Esophagus muscularis mucosa (tissue), 4 donors: ENCODE measurements at regions of chr6 and their contacts with region 1.

Region 1: GRCh38 chr6:3732345-3733141 is 19.0 kb downstream of the PXDC1 start:
- DNase-seq: no peak
- H3K4me3 ChIP-seq: no peak overlapping the region
- H3K27ac ChIP-seq: peak overlapping the region in 2 of 4 donors; percentile 16 to 34
- H3K4me1 ChIP-seq: peaks cover 8 to 42% (median 37%) of the 10 kb centered on the region in 4 donors
- H3K27me3 ChIP-seq: no peaks in the 10 kb centered on the region
- CTCF ChIP-seq: peak; percentile 83 to 86 (median 86)
- EP300 ChIP-seq: no peak
- POLR2A ChIP-seq: no peak

Region 2: DNA sequence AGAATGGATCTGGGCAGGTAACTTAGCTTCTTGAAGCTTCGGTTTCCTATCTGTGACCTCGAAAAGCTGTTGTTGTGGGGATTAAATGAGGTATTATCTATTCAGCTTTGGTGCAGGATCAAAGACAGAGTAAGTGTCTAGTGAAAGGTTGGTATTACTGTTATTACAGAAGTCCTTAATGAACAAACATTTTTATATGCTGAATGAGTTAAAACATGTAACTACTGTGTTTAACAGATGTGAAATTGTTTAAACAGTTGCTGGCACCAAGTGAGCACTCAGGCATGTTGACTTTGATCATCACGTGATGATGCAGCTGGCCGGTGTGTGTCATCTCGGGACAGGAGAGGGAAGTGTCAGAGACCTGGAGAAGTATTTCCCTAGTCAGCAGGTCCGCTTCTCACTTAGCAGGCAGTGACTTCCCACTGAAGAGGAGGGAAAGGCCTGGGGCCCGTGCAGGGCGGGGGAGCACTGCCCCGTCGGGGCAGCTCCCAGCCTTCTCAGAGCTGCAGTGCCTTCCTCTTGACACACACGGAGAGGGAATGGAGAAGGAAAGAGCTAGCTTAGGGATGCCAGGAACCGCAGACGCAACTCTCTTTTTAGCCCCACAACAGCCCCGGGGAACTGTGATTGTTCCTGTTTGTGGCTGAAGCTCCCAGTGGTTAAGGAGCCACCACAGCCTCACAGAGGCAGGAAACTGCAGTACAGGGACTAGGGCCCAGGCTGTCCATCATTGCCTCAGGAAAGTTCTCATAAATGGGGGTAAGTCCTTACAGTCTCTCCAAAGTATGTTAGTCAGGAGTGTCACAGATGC is 593.2 kb before region 1 on chr6:
- intact Hi-C with region 1: loop called (anchors 10 kb)
- DNase-seq: no peak
- H3K4me3 ChIP-seq: no peak overlapping the region
- H3K27ac ChIP-seq: peak overlapping the region; percentile 6 to 44 (median 16)
- H3K4me1 ChIP-seq: peaks cover 4 to 11% (median 7%) of the 10 kb centered on the region in 4 donors
- H3K27me3 ChIP-seq: no peaks in the 10 kb centered on the region
- CTCF ChIP-seq: no peak
- EP300 ChIP-seq: no peak
- POLR2A ChIP-seq: no peak

Region 3: GRCh38 chr6:3209114-3210023 is 523.2 kb before region 1 on chr6:
- intact Hi-C with region 1: no loop called
- DNase-seq: no peak
- H3K4me3 ChIP-seq: no peak overlapping the region
- H3K27ac ChIP-seq: peak overlapping the region in 3 of 4 donors; percentile 18 to 77 (median 44)
- H3K4me1 ChIP-seq: peaks cover 0 to 40% (median 34%) of the 10 kb centered on the region in 4 donors
- H3K27me3 ChIP-seq: no peaks in the 10 kb centered on the region
- CTCF ChIP-seq: peak in 1 of 3 experiments; percentile 4
- EP300 ChIP-seq: no peak
- POLR2A ChIP-seq: no peak

Region 4: DNA sequence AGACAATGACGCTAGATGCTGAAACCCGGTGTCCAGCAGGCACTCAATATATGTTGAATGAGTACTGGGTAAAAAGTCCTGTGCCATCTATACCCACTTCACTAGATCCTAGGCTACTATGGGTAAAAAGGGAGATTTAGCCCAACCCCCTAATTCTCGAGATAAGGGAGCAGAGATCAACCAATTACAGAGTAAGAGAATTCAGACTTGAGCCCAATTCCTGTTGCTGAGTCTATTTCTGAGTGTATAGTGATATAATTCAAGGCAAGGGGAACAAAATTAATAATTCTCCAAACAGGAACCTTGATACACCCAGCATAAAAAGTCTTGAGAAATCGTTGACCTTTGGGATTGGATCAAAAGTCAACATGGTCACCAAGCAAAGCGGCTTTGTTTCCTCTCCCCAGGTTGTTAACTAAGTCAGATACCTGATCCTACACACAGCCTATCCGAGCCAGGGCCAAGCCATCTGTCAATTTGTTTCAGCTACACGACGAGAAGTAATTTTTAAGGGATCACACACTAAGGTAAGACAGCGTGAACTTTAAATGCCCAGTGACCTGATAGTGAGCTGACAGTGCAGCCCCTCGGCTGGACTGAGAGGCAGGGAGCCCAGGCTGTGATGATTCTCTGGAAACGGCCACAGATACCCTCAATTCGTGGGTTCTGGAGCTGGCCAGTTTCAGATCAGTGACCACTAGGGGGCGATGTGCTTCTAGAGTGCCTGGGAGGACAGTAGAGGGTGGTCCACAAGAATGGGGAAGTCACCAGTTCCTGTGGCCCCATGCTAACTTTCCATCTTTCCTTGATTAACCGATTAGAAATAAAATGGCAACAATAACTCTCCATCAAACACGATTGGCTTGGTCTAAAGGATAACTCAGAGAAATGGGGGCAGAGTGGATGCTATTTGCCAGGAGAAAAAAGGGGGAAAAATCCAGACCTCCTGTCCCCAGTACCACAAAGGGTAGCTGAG is 321.9 kb before region 1 on chr6:
- intact Hi-C with region 1: loop called (anchors 5 kb)
- DNase-seq: no peak
- H3K4me3 ChIP-seq: no peak overlapping the region
- H3K27ac ChIP-seq: no peak overlapping the region
- H3K4me1 ChIP-seq: peaks cover 0 to 15% (median 10%) of the 10 kb centered on the region in 4 donors
- H3K27me3 ChIP-seq: no peaks in the 10 kb centered on the region
- CTCF ChIP-seq: peak; percentile 58 to 74 (median 64)
- EP300 ChIP-seq: no peak
- POLR2A ChIP-seq: no peak

Region 5: DNA sequence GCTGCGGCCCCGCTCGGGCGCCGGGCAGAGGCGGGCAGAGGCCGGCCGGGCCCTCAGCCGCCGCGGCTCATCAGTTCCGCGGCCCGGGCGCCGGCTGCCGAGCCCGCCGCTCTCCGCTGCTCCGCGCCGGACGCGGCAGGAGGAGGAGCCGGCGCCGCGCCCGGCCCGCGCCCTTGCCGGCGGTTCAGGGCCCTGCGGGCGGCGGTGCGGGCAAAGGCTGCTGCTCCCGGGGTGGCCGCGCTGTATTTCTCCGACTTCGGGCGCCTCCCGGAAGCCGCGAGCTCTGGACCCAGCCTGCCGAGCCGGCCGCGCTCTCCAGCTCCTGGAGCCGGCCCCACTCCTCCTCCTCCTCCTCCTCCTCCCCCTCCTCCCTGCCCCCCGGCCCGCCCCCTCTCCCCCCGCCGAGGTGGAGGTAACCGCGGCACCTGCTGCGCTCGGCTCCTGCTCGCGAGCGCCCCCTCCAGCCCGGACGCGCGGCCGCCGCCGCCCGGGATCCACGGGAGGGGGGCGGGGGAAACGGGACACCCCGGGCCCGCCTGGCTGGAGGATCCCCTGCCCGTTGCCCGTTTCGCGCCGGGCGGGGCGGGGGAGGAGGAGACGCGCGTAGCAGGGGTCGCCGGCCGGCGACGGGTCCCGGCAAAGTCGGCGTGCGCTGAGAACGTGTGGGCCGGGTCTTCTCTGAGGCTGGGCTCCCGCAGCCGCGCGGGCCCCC is 275.6 kb before region 1 on chr6 and contains the start of gene SLC22A23:
- intact Hi-C with region 1: loop called (anchors 5 kb)
- DNase-seq: no peak
- H3K4me3 ChIP-seq: peak within 1 kb of the TSS; percentile 64 to 75 (median 74)
- H3K27ac ChIP-seq: peak within 1 kb of the TSS; percentile 83 to 87 (median 84)
- H3K4me1 ChIP-seq: peaks cover 28 to 42% (median 40%) of the 10 kb centered on the region in 4 donors
- H3K27me3 ChIP-seq: no peaks in the 10 kb centered on the region
- CTCF ChIP-seq: peak; percentile 63 to 92 (median 79)
- EP300 ChIP-seq: no peak
- POLR2A ChIP-seq: no peak
- total RNA-seq, gene SLC22A23: 7.6 to 13.1 (median 9.5) TPM

Region 6: GRCh38 chr6:3566812-3567211 is 165.7 kb before region 1 on chr6:
- intact Hi-C with region 1: no loop called
- DNase-seq: no peak
- H3K4me3 ChIP-seq: no peak overlapping the region
- H3K27ac ChIP-seq: no peak overlapping the region
- H3K4me1 ChIP-seq: peaks cover 0 to 10% (median 4%) of the 10 kb centered on the region in 4 donors
- H3K27me3 ChIP-seq: no peaks in the 10 kb centered on the region
- CTCF ChIP-seq: no peak
- EP300 ChIP-seq: no peak
- POLR2A ChIP-seq: no peak

Region 7: DNA sequence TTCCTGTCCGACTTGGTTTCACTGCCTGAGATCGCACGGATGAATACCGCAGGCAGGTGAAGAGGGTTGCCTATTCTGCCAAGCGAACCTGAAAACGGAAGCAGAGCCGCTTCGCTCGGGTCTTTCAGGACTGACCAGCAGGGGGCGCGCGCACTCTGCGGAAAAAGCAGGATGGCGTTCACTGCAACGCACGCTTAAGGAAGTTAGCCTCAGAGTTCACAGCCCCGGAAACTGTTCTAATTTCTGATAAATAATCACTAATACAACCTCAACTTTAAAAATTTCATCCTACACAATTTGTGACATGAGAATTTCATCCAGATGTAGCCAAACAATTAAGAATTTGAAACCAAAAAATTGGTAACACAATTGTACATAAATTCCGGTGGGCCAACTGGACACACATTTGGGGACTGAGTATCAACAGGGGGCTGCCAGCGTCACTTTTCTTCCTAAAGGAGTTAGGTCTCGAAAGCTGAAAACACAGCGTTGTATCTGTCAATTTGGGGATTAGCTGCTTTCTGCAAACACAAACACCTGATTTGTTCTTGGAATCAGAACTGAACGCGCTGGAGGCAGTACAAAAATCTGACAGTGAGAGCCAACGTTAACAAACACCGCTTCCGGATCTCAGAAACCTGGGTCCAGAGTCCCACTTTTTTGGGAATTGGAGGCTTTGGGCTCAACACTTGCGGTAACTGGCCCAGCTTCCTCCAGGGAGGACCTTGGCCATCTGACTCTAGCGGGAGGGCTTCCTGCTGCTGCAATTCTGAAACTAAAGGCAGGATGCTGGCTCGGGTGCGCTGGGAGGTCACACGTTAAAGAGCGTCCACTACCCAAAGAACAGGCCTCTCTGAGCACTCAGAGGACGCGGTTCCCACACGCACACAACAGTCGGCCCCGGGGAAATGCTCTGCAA is 10.1 kb after region 1 on chr6:
- intact Hi-C with region 1: no loop called
- DNase-seq: peak; percentile 97
- H3K4me3 ChIP-seq: peak overlapping the region; percentile 11 to 40 (median 30)
- H3K27ac ChIP-seq: peak overlapping the region; percentile 87 to 99 (median 99)
- H3K4me1 ChIP-seq: peaks cover 78 to 100% (median 99%) of the 10 kb centered on the region in 4 donors
- H3K27me3 ChIP-seq: no peaks in the 10 kb centered on the region
- CTCF ChIP-seq: peak; percentile 92 to 99 (median 94)
- EP300 ChIP-seq: peak; percentile 42
- POLR2A ChIP-seq: no peak